PC-9 (cell line): ENCODE measurements at regions of chr4 and their contacts with region 1.

Region 1: DNA sequence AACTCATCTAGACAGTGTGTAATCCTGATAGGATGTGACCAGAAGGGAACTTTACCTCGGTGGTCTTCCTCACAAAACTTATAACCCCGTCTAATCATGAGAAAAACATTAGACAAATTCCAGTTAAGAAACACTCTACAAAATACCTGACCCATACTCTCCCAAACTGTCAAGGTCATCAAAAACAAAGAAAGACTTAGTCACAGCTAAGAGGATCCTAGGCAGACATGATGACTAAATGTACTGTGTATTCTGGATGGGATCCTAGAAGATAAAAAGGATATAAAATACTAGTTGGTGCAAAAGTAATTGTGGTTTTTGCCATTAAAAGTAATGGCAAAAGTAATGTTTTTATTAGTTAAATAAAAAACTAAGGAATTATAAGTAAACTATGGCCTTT is 81.6 kb downstream of the DTHD1 start:
- DNase-seq: no peak
- H3K4me3 ChIP-seq: no peak overlapping the region
- H3K27ac ChIP-seq: no peak overlapping the region
- H3K4me1 ChIP-seq: no peaks in the 10 kb centered on the region
- H3K27me3 ChIP-seq: no peaks in the 10 kb centered on the region
- CTCF ChIP-seq: no peak

Region 2: DNA sequence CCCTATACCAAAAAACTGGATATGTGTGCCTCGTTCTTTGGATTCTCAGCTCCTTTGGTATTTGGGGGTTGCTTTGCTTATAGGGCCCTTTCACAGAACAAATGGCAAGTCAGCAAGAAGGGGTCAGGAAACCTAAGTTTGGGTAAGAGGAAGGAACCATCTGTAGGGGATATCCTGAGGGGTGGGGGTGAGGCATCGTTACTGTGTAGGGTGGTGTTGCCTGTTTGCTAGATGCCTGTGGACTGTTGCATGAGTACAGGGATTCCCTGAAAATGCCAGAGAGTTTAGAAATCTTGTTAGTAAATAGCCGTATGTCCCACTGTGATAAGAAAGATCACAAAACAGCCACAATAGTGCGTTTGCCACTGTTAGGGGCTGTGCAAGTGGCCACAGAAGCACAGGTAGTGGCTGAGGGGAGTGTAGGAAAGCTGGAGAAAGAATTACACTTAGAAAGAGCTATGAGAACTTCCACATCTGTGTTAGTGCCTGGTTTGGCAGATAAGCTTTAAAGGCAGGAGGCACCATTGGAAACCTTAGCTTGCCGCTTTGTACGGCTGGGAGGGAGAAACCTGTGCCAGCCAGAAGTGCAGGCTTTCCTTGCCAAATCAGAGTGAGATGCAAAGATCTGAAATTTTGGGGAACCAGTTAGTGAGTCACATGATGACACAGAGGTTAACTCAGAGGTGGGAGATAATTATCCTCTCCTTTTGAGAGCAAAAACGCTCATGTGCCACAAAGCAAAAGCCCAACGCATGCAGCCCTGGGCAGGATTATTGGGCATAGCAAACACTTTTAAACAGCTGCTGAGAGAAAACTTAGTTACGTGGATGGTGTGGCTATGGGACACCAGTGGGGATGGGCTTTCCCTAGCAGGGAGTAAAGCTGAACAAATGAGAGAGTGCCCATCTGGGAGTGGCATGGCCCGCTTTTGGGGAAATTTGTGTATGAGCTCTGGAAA is 462.5 kb before region 1 on chr4:
- CTCF ChIA-PET with region 1: no interaction called
- POLR2A ChIA-PET with region 1: no interaction called
- intact Hi-C with region 1: no loop called
- DNase-seq: no peak
- H3K4me3 ChIP-seq: no peak overlapping the region
- H3K27ac ChIP-seq: no peak overlapping the region
- H3K4me1 ChIP-seq: no peaks in the 10 kb centered on the region
- H3K27me3 ChIP-seq: no peaks in the 10 kb centered on the region
- CTCF ChIP-seq: no peak

Region 3: GRCh38 chr4:37770016-37770415 is 1407.0 kb after region 1 on chr4:
- CTCF ChIA-PET with region 1: no interaction called
- POLR2A ChIA-PET with region 1: no interaction called
- intact Hi-C with region 1: loop called (anchors 5 kb)
- DNase-seq: no peak
- H3K4me3 ChIP-seq: no peak overlapping the region
- H3K27ac ChIP-seq: no peak overlapping the region
- H3K4me1 ChIP-seq: no peaks in the 10 kb centered on the region
- H3K27me3 ChIP-seq: no peaks in the 10 kb centered on the region
- CTCF ChIP-seq: no peak